ENCODE measurements at regions of chr17 and their contacts with region 1.

Region 1: DNA sequence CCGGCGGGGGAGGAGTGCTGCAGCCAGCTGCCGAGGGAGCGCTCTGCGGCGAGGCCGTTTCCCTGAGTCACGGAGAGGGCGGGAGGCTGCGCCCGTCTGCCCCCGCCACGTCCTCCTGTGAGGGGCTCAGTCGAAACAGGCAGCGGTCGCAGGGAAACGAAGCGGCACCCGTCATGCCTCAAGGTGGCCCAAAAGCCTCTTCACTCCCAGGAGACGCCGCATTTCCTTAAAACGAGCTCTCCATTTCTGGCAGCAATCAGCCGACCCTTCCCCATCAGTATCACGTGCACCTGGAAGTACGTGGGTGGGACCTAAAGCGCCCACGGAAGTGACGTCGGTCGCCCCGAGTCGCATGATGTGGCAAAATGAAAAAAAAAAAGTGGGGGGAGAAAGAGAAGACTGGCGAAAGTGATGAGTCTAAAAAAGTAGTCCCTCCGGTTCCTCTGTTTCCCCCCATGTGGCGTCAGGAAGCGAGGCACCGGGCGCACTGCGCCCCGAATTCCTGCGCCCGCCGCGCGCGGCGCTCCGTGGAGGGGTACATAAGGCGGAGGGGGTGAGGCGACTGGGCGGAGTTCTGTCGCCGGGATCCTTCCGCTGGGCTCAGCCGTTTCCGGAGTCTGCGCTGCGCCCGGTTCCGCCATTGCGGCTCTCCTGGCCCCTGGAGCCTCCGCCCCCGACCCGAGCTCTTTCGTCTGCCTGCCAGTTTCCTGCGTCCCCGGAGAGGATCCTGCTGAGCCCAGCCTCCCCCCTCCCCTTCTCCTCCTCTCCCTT is at the start of gene CLTC:
- DNase-seq: peak; percentile 89
- ATAC-seq: peak; percentile 83
- H3K4me3 Mint-ChIP-seq: peak within 1 kb of the TSS; percentile 94
- H3K27ac Mint-ChIP-seq: peak within 1 kb of the TSS; percentile 98
- H3K4me1 Mint-ChIP-seq: peaks cover 59% of the 10 kb centered on the region
- H3K27me3 Mint-ChIP-seq: no peaks in the 10 kb centered on the region
- CTCF ChIP-seq: no peak
- total RNA-seq, gene CLTC: 148 and 189 TPM in 2 replicates

Region 2: GRCh38 chr17:57849874-57850754 is 1769.4 kb before region 1 on chr17 and contains the start of gene MRPS23:
- CTCF ChIA-PET with region 1: no interaction called
- POLR2A ChIA-PET with region 1: no interaction called
- intact Hi-C with region 1: loop called (anchors 5 kb)
- DNase-seq: peak; percentile 87
- ATAC-seq: peak; percentile 95
- H3K4me3 Mint-ChIP-seq: peak within 1 kb of the TSS; percentile 93
- H3K27ac Mint-ChIP-seq: peak within 1 kb of the TSS; percentile 96
- H3K4me1 Mint-ChIP-seq: peaks cover 38% of the 10 kb centered on the region
- H3K27me3 Mint-ChIP-seq: no peaks in the 10 kb centered on the region
- CTCF ChIP-seq: no peak
- total RNA-seq, gene MRPS23: 37.9 and 47.4 TPM in 2 replicates

Region 3: DNA sequence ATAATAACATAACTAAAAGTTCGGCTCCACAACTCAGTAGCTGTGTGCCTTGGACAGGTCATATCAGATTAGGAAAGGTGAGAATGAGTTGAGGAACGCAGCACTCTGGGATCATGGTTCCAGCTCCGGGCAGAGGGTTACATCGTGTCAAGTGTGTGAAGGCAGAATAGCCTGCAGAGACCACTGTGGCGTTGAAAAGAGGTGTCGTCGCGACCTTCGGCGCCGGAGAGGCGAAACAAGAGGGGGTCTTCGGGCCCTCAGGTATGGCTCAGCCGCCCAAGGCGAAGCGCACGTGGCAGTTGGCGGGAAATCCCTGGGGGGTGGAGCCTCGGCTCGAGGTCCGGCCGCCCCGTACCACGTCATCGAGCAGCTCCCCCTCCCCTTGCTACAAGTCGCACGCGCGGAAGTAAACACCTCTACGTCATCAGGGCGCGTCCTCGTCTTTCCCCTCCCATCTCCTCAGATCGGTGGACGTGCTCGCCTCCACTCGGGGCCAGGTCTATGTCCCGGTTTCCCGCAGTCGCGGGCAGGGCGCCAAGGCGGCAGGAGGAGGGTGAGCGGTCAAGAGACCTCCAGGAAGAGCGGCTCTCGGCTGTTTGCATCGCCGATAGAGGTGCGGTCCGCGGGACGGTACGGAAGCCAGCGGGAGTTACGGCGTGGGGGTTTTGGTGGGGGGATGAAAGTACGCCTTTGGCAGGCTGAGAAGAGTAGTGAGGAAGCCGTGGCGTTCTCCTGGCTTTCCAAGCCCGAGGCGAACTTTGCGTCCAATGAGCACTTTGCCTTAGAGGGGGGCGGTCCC is 54.1 kb before region 1 on chr17 and contains the start of gene DHX40:
- CTCF ChIA-PET with region 1: no interaction called
- POLR2A ChIA-PET with region 1: interaction called, 56 read pairs
- intact Hi-C with region 1: loop called (anchors 1 kb)
- DNase-seq: peak; percentile 88
- ATAC-seq: peak; percentile 91
- H3K4me3 Mint-ChIP-seq: peak within 1 kb of the TSS; percentile 100
- H3K27ac Mint-ChIP-seq: peak within 1 kb of the TSS; percentile 99
- H3K4me1 Mint-ChIP-seq: peaks cover 17% of the 10 kb centered on the region
- H3K27me3 Mint-ChIP-seq: no peaks in the 10 kb centered on the region
- CTCF ChIP-seq: no peak
- total RNA-seq, gene DHX40: 19.1 and 22.6 TPM in 2 replicates

Region 4: DNA sequence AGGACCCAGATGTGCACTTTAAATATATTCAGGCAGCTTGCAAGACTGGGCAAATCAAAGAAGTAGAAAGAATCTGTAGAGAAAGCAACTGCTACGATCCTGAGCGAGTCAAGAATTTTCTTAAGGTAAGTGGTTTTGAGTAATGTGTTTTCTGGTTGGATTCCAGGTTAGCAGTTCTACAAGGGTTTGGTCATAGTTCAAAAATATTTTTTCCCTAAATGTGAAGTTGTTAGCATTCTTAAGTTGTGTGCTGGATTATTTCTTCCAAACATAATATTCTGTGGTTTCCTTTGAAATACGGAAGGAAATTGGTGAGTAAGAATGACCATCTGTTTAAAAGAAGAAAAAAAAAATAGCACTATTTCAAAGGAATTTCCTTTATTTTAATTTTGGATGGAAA is 49.3 kb after region 1 on chr17:
- CTCF ChIA-PET with region 1: no interaction called
- POLR2A ChIA-PET with region 1: interaction called, 41 read pairs
- intact Hi-C with region 1: loop called (anchors 2 kb)
- DNase-seq: no peak
- ATAC-seq: peak; percentile 25
- H3K4me3 Mint-ChIP-seq: peak overlapping the region; percentile 24
- H3K27ac Mint-ChIP-seq: peak overlapping the region; percentile 66
- H3K4me1 Mint-ChIP-seq: peaks cover 50% of the 10 kb centered on the region
- H3K27me3 Mint-ChIP-seq: no peaks in the 10 kb centered on the region
- CTCF ChIP-seq: no peak

Region 5: GRCh38 chr17:59786536-59787319 is 167.2 kb after region 1 on chr17:
- CTCF ChIA-PET with region 1: no interaction called
- POLR2A ChIA-PET with region 1: interaction called, 7 read pairs
- intact Hi-C with region 1: loop called (anchors 2 kb)
- DNase-seq: peak; percentile 33
- ATAC-seq: peak; percentile 86
- H3K4me3 Mint-ChIP-seq: peak overlapping the region; percentile 72
- H3K27ac Mint-ChIP-seq: peak overlapping the region; percentile 97
- H3K4me1 Mint-ChIP-seq: peaks cover 58% of the 10 kb centered on the region
- H3K27me3 Mint-ChIP-seq: no peaks in the 10 kb centered on the region
- CTCF ChIP-seq: no peak

Region 6: GRCh38 chr17:59964482-59965328 is 345.2 kb after region 1 on chr17 and contains the start of gene RNFT1:
- CTCF ChIA-PET with region 1: no interaction called
- POLR2A ChIA-PET with region 1: interaction called, 9 read pairs
- intact Hi-C with region 1: loop called (anchors 1 kb)
- DNase-seq: peak; percentile 90
- ATAC-seq: peak; percentile 89
- H3K4me3 Mint-ChIP-seq: peak within 1 kb of the TSS; percentile 90
- H3K27ac Mint-ChIP-seq: peak within 1 kb of the TSS; percentile 94
- H3K4me1 Mint-ChIP-seq: peaks cover 19% of the 10 kb centered on the region
- H3K27me3 Mint-ChIP-seq: no peaks in the 10 kb centered on the region
- CTCF ChIP-seq: no peak
- total RNA-seq, gene RNFT1: 29.0 and 29.1 TPM in 2 replicates

Measured in activated B cell treated with CpG ODN at 0.5 μM for 24 hours (primary cell).